Stomach (tissue), 19 donors: ENCODE measurements at regions of chr17 and their contacts with region 1.

Region 1: DNA sequence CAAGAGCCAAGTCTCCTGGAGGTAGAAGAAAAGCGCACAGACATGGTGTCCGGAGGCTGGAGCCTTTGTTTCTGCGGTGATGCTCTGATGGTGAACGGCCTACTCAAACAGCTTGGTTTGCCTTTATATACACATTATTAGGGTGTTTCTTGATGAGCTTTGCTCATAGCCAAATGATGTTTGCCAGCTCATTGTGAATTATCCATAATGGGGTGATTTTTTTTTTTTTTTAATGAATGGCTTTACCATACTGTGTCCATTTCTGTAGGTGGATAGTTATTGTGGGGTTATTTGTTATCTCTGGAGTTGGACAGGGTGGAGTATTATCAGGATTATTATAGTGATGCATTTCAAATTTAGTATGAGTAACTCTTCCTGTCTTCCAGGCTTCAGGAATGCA is at the start of gene KRT27:
- DNase-seq: no peak
- H3K4me3 ChIP-seq: no peak within 1 kb of the TSS
- H3K27ac ChIP-seq: no peak within 1 kb of the TSS
- H3K4me1 ChIP-seq: no peaks in the 10 kb centered on the region
- H3K27me3 ChIP-seq: peaks cover 0 to 49% (median 9%) of the 10 kb centered on the region in 3 donors
- CTCF ChIP-seq: no peak
- EP300 ChIP-seq: no peak
- POLR2A ChIP-seq: no peak
- total RNA-seq, gene KRT27: not detected

Region 2: GRCh38 chr17:40615295-40615988 is 167.0 kb before region 1 on chr17:
- intact Hi-C with region 1: loop called (anchors 10 kb)
- DNase-seq: peak; percentile 57 to 86
- H3K4me3 ChIP-seq: no peak overlapping the region
- H3K27ac ChIP-seq: no peak overlapping the region
- H3K4me1 ChIP-seq: peaks cover 0 to 19% (median 13%) of the 10 kb centered on the region in 4 donors
- H3K27me3 ChIP-seq: peaks cover 0 to 54% (median 6%) of the 10 kb centered on the region in 3 donors
- CTCF ChIP-seq: peak in 4 of 7 experiments; percentile 8 to 38 (median 24)
- EP300 ChIP-seq: no peak
- POLR2A ChIP-seq: no peak

Region 3: DNA sequence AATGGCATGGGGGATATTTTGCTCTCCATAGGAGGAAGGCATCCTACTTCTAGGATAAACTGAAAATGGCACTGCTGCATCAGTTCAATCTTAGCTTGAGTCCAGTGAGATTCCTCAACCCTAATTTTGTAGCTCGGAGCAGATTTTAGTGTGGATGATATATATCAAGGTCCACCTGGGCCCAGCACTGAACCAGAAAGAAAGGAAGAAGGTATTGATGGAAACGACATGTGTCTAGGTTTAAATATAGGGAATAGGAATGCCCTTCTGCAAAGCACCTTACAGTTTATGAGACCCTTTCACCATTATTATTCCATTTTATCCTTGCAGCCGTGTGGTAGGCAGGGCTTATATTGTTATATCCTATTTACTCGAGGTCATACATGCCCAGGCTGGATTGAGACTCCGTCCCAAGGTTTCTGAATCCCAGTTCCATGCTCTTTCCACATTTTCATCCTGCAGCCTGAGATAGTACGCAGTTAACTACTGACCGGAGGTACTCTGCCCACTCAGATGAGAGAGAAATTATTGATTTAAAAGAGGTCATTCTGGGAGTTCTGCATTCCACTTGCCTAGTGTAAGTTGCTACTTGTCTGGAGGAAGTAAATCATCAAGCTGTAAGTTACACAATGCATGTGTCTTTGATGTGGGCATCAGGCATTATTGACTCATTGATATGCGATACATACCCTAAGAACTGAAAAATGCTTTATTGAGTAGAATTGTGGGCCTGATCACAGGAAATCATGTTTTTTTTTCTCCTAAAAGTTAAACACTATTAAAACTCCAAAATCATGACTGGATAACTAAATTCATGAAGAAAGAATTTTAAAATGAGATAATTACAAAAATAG is 174.2 kb after region 1 on chr17:
- intact Hi-C with region 1: no loop called
- DNase-seq: peak in 1 of 2 donors; percentile 60
- H3K4me3 ChIP-seq: no peak overlapping the region
- H3K27ac ChIP-seq: no peak overlapping the region
- H3K4me1 ChIP-seq: no peaks in the 10 kb centered on the region
- H3K27me3 ChIP-seq: peaks cover 0 to 6% (median 0%) of the 10 kb centered on the region in 3 donors
- CTCF ChIP-seq: no peak
- EP300 ChIP-seq: no peak
- POLR2A ChIP-seq: no peak

Region 4: GRCh38 chr17:40980596-40980995 is 198.1 kb after region 1 on chr17:
- intact Hi-C with region 1: no loop called
- DNase-seq: peak in 1 of 2 donors; percentile 78
- H3K4me3 ChIP-seq: no peak overlapping the region
- H3K27ac ChIP-seq: no peak overlapping the region
- H3K4me1 ChIP-seq: no peaks in the 10 kb centered on the region
- H3K27me3 ChIP-seq: peaks cover 0 to 37% (median 0%) of the 10 kb centered on the region in 3 donors
- CTCF ChIP-seq: no peak
- EP300 ChIP-seq: no peak
- POLR2A ChIP-seq: no peak